Natural killer cell (primary cell): ENCODE measurements at regions of chr11 and their contacts with region 1.

Region 1: DNA sequence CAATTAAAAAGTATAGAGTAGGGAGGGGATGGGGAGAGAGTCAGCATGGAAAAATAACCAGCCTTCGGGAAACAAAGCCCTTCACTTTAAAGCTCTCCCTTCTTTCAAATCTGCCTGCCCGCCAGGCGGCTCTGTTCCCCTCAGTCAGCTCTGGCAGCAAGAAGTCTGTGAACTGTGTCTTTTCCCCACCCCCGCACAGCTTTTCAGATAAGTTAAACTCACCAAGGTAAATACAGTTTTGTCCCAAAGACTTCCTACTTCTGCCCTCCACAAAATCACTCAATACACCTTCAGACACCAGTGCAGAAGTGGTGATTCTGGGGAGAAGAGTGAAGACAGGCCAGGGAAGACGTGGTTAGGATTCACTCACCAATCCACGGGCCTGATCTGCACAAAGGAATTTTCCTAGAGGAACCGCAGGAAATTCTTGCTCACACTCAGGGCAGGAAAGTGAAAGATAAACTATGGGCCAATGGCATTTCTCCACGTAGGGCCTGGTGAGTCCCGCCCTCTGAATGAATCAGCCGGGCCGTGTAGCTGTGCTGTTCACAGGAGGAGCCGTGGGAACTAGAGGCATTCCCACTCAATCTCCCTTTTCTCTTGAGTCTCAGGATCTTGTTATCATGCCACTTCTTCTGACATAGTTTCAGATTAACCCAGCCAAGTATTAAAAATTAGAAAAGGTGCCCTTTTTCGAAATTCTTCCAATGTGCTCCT is at the start of gene TRIM5:
- DNase-seq: peak; percentile 69 to 92
- ATAC-seq: peak; percentile 81 to 86 (median 85)
- H3K4me3 ChIP-seq: peak within 1 kb of the TSS; percentile 68
- H3K4me3 Mint-ChIP-seq: peak within 1 kb of the TSS; percentile 99
- H3K27ac ChIP-seq: peak within 1 kb of the TSS; percentile 90
- H3K27ac Mint-ChIP-seq: peak within 1 kb of the TSS; percentile 98
- H3K4me1 ChIP-seq: peaks cover 15% of the 10 kb centered on the region
- H3K4me1 Mint-ChIP-seq: peaks cover 30 to 51% of the 10 kb centered on the region in 2 donors
- H3K27me3 ChIP-seq: no peaks in the 10 kb centered on the region
- H3K27me3 Mint-ChIP-seq: no peaks in the 10 kb centered on the region
- CTCF ChIP-seq: peak; percentile 58
- total RNA-seq, gene TRIM5: 16.3 to 24.4 (median 20.2) TPM

Region 2: GRCh38 chr11:4607781-4608666 is 1076.8 kb before region 1 on chr11 and contains the start of gene TRIM68:
- intact Hi-C with region 1: loop called (anchors 10 kb)
- DNase-seq: peak; percentile 95 to 96
- ATAC-seq: peak; percentile 99 to 100 (median 100)
- H3K4me3 ChIP-seq: peak within 1 kb of the TSS; percentile 70
- H3K4me3 Mint-ChIP-seq: peak within 1 kb of the TSS; percentile 94
- H3K27ac ChIP-seq: peak within 1 kb of the TSS; percentile 83
- H3K27ac Mint-ChIP-seq: peak within 1 kb of the TSS; percentile 88 to 90
- H3K4me1 ChIP-seq: peaks cover 15% of the 10 kb centered on the region
- H3K4me1 Mint-ChIP-seq: peaks cover 49 to 57% of the 10 kb centered on the region in 2 donors
- H3K27me3 ChIP-seq: no peaks in the 10 kb centered on the region
- H3K27me3 Mint-ChIP-seq: no peaks in the 10 kb centered on the region
- CTCF ChIP-seq: no peak
- total RNA-seq, gene TRIM68: 7.6 to 14.7 (median 9.8) TPM

Region 3: GRCh38 chr11:5351208-5351607 is 333.6 kb before region 1 on chr11 and contains the start of gene OR51B6:
- intact Hi-C with region 1: no loop called
- DNase-seq: no peak
- ATAC-seq: no peak
- H3K4me3 ChIP-seq: no peak within 1 kb of the TSS
- H3K4me3 Mint-ChIP-seq: no peak within 1 kb of the TSS
- H3K27ac ChIP-seq: no peak within 1 kb of the TSS
- H3K27ac Mint-ChIP-seq: no peak within 1 kb of the TSS
- H3K4me1 ChIP-seq: no peaks in the 10 kb centered on the region
- H3K4me1 Mint-ChIP-seq: no peaks in the 10 kb centered on the region
- H3K27me3 ChIP-seq: no peaks in the 10 kb centered on the region
- H3K27me3 Mint-ChIP-seq: peaks cover 0 to 5% of the 10 kb centered on the region in 2 donors
- CTCF ChIP-seq: no peak
- total RNA-seq, gene OR51B6: not detected

Region 4: DNA sequence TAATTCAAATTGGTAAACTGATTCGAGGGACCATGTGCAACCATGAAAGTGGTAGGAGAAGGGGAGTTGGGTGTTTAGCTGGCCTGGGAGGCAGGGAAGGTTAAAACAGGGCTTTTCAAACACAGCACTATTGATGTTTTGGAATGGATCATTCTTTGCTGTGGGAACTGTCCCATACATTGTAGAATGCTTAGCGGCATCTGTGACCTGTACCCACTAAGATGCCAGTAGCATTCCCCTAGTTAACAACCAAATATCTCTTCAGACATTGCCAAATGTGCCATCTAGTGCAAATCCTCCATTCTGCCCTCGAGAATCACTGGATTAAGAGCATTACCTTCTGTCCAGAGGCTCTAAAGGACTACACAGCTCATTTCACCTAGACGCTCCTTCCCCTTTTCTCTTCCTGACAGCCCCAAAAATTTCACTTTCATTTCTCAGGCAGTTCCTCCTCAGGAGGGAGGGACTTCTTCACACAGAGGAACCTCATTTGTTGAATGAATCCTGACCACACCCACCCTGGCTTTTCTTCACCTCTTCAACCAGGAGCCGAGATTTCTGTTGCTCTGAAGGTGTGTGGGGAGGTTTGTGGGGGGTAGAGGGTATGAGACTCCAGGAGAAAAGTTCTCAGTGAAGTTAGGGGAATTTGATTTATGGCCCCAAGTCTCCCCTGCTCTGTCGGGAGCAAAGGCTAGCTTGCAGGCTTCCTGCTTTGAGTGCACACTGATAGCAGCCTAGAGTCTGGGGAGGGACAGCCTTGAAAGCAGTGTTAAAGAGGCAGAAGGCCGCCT is 60.1 kb before region 1 on chr11 and contains the start of gene TRIM34:
- intact Hi-C with region 1: loop called (anchors 1 kb)
- DNase-seq: peak; percentile 38 to 85
- ATAC-seq: peak; percentile 96 to 97 (median 97)
- H3K4me3 ChIP-seq: peak within 1 kb of the TSS; percentile 55
- H3K4me3 Mint-ChIP-seq: peak within 1 kb of the TSS; percentile 90
- H3K27ac ChIP-seq: peak within 1 kb of the TSS; percentile 75
- H3K27ac Mint-ChIP-seq: peak within 1 kb of the TSS; percentile 85 to 86
- H3K4me1 ChIP-seq: peaks cover 23% of the 10 kb centered on the region
- H3K4me1 Mint-ChIP-seq: peaks cover 47 to 57% of the 10 kb centered on the region in 2 donors
- H3K27me3 ChIP-seq: no peaks in the 10 kb centered on the region
- H3K27me3 Mint-ChIP-seq: no peaks in the 10 kb centered on the region
- CTCF ChIP-seq: no peak
- total RNA-seq, gene TRIM34: 8.2 to 10.0 (median 9.9) TPM

Region 5: GRCh38 chr11:5700421-5701054 is 15.7 kb after region 1 on chr11:
- intact Hi-C with region 1: loop called (anchors 2 kb)
- DNase-seq: no peak
- ATAC-seq: no peak
- H3K4me3 ChIP-seq: no peak overlapping the region
- H3K4me3 Mint-ChIP-seq: no peak overlapping the region
- H3K27ac ChIP-seq: no peak overlapping the region
- H3K27ac Mint-ChIP-seq: peak overlapping the region; percentile 78 to 84
- H3K4me1 ChIP-seq: no peaks in the 10 kb centered on the region
- H3K4me1 Mint-ChIP-seq: peaks cover 64 to 71% of the 10 kb centered on the region in 2 donors
- H3K27me3 ChIP-seq: no peaks in the 10 kb centered on the region
- H3K27me3 Mint-ChIP-seq: no peaks in the 10 kb centered on the region
- CTCF ChIP-seq: no peak

Region 6: DNA sequence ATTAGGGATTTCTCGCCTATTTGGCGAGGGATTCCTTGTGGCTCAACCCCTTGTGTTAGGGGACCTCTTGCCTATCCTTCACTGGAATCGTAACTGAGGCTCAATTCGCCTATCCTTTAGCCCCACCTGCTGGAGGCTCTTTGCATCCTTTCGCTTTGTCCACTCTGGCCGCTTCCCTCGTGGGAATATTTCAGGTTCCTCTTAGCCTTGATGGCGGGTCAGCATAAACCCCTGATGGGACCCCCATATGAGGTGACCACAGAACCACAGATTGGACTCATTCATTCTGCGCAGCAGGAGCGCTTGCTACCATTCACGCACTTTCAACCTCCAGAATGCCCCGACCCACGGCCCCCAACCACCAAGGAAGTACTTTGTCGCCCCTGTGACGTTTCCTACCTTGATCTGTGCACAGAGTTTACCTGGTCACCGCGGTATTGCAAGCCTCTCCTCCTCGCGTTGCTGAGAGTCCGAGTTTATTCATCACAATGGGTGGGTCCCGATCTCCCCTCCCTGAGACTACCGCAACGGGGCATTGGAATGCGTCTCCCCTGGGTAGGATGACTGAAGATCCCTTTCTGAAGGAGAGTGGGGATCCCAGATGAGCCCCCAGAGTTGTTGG is 123.8 kb after region 1 on chr11 and contains the start of gene OR52N2:
- intact Hi-C with region 1: loop called (anchors 1 kb)
- DNase-seq: peak; percentile 63 to 87
- ATAC-seq: peak; percentile 87 to 95 (median 87)
- H3K4me3 ChIP-seq: peak within 1 kb of the TSS; percentile 48
- H3K4me3 Mint-ChIP-seq: peak within 1 kb of the TSS; percentile 83
- H3K27ac ChIP-seq: no peak within 1 kb of the TSS
- H3K27ac Mint-ChIP-seq: peak within 1 kb of the TSS in 1 of 2 donors; percentile 19
- H3K4me1 ChIP-seq: peaks cover 9% of the 10 kb centered on the region
- H3K4me1 Mint-ChIP-seq: peaks cover 12% of the 10 kb centered on the region in 2 donors
- H3K27me3 ChIP-seq: peaks cover 6% of the 10 kb centered on the region
- H3K27me3 Mint-ChIP-seq: peaks cover 26 to 34% of the 10 kb centered on the region in 2 donors
- CTCF ChIP-seq: peak; percentile 85
- total RNA-seq, gene OR52N2: not detected

Region 7: GRCh38 chr11:6234387-6235107 is 549.7 kb after region 1 on chr11 and contains the start of gene FHIP1B:
- intact Hi-C with region 1: loop called (anchors 10 kb)
- DNase-seq: peak; percentile 98 to 100
- ATAC-seq: peak; percentile 91 to 98 (median 91)
- H3K4me3 ChIP-seq: peak within 1 kb of the TSS; percentile 98
- H3K4me3 Mint-ChIP-seq: peak within 1 kb of the TSS; percentile 98
- H3K27ac ChIP-seq: peak within 1 kb of the TSS; percentile 91
- H3K27ac Mint-ChIP-seq: peak within 1 kb of the TSS; percentile 89 to 98
- H3K4me1 ChIP-seq: peaks cover 25% of the 10 kb centered on the region
- H3K4me1 Mint-ChIP-seq: peaks cover 51 to 57% of the 10 kb centered on the region in 2 donors
- H3K27me3 ChIP-seq: no peaks in the 10 kb centered on the region
- H3K27me3 Mint-ChIP-seq: no peaks in the 10 kb centered on the region
- CTCF ChIP-seq: no peak
- total RNA-seq, gene FHIP1B: 50.6 to 76.9 (median 58.4) TPM

Region 8: GRCh38 chr11:6481012-6481923 is 796.5 kb after region 1 on chr11 and contains the starts of genes ARFIP2 and TIMM10B:
- intact Hi-C with region 1: loop called (anchors 5 kb)
- DNase-seq: peak; percentile 95 to 99
- ATAC-seq: peak; percentile 92 to 98 (median 96)
- H3K4me3 ChIP-seq: peak within 1 kb of the TSS; percentile 74
- H3K4me3 Mint-ChIP-seq: peak within 1 kb of the TSS; percentile 91
- H3K27ac ChIP-seq: peak within 1 kb of the TSS; percentile 95
- H3K27ac Mint-ChIP-seq: peak within 1 kb of the TSS; percentile 95 to 99
- H3K4me1 ChIP-seq: peaks cover 22% of the 10 kb centered on the region
- H3K4me1 Mint-ChIP-seq: peaks cover 32 to 37% of the 10 kb centered on the region in 2 donors
- H3K27me3 ChIP-seq: no peaks in the 10 kb centered on the region
- H3K27me3 Mint-ChIP-seq: no peaks in the 10 kb centered on the region
- CTCF ChIP-seq: no peak
- total RNA-seq, gene ARFIP2: 44.7 to 62.3 (median 51.4) TPM
- total RNA-seq, gene TIMM10B: 69.6 to 92.8 (median 71.4) TPM